Left ventricle myocardium inferior (tissue), 1 donor: ENCODE measurements at regions of chr3 and their contacts with region 1.

Region 1: DNA sequence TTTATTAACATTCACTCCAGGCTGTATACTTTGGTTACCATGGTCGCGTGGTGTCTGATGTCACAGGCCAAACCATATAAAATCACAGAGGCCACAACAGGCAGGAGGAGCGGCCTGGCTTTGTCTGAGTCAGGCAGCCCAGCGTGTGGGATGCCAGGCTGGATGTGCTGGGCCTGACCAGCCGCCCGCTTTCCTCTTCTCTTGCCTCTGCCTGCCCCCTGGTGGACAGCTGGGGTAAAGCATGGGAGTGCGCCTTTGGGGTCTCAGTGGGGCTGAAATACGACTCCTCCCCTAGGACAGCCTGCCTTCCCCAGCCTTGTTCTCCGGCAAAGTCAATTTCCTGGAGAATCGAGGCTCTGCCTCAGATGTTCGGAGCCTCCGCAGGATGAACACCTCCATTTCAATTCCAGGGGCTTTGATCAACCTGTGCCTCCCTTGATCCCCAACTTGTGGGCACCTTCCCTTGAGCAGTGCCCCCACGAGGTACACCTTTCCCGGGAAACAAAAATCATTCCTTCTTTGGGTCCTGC is 78.2 kb downstream of the CCNL1 start:
- DNase-seq: peak; percentile 88
- H3K4me3 ChIP-seq: no peak overlapping the region
- H3K27ac ChIP-seq: no peak overlapping the region
- H3K4me1 ChIP-seq: peaks cover 32% of the 10 kb centered on the region
- H3K27me3 ChIP-seq: no peaks in the 10 kb centered on the region
- CTCF ChIP-seq: peak; percentile 96

Region 2: GRCh38 chr3:156535162-156535627 is 546.6 kb before region 1 on chr3:
- intact Hi-C with region 1: loop called (anchors 10 kb)
- DNase-seq: peak; percentile 52
- H3K4me3 ChIP-seq: no peak overlapping the region
- H3K27ac ChIP-seq: peak overlapping the region; percentile 79
- H3K4me1 ChIP-seq: peaks cover 35% of the 10 kb centered on the region
- H3K27me3 ChIP-seq: no peaks in the 10 kb centered on the region
- CTCF ChIP-seq: peak; percentile 38

Region 3: GRCh38 chr3:157136647-157137387 is 55.1 kb after region 1 on chr3:
- intact Hi-C with region 1: loop called (anchors 2 kb)
- DNase-seq: no peak
- H3K4me3 ChIP-seq: no peak overlapping the region
- H3K27ac ChIP-seq: peak overlapping the region; percentile 82
- H3K4me1 ChIP-seq: peaks cover 64% of the 10 kb centered on the region
- H3K27me3 ChIP-seq: no peaks in the 10 kb centered on the region
- CTCF ChIP-seq: no peak